ENCODE measurements at regions of chr15 and their contacts with region 1.

Region 1: GRCh38 chr15:49235446-49236124 is 65.5 kb downstream of the GALK2 start:
- DNase-seq: peak; percentile 87
- H3K4me3 ChIP-seq: 0 out of 2 replicates have a peak overlapping the region, but pooled peaks have one; percentile 0
- H3K27ac ChIP-seq: peak overlapping the region; percentile 43
- H3K4me1 ChIP-seq: peaks cover 44% of the 10 kb centered on the region
- H3K27me3 ChIP-seq: no peaks in the 10 kb centered on the region

Region 2: GRCh38 chr15:49060710-49061505 is 174.7 kb before region 1 on chr15:
- in situ Hi-C with region 1: no loop called
- DNase-seq: peak; percentile 37
- H3K4me3 ChIP-seq: no peak overlapping the region
- H3K27ac ChIP-seq: no peak overlapping the region
- H3K4me1 ChIP-seq: peaks cover 8% of the 10 kb centered on the region; the same call in 1 of the 2 replicates
- H3K27me3 ChIP-seq: no peaks in the 10 kb centered on the region

Region 3: GRCh38 chr15:50003786-50004334 is 768.3 kb after region 1 on chr15:
- in situ Hi-C with region 1: loop called (anchors 25 kb)
- DNase-seq: peak; percentile 94
- H3K4me3 ChIP-seq: peak overlapping the region; percentile 41; the same call in 1 of the 2 replicates
- H3K27ac ChIP-seq: peak overlapping the region; percentile 76
- H3K4me1 ChIP-seq: peaks cover 23% of the 10 kb centered on the region
- H3K27me3 ChIP-seq: no peaks in the 10 kb centered on the region

Region 4: GRCh38 chr15:50315814-50316630 is 1080.4 kb after region 1 on chr15:
- in situ Hi-C with region 1: loop called (anchors 25 kb)
- DNase-seq: peak; percentile 71
- H3K4me3 ChIP-seq: no peak overlapping the region
- H3K27ac ChIP-seq: no peak overlapping the region
- H3K4me1 ChIP-seq: no peaks in the 10 kb centered on the region
- H3K27me3 ChIP-seq: no peaks in the 10 kb centered on the region